Sciatic nerve (tissue), 2 donors: ENCODE measurements at regions of chr10 and their contacts with region 1.

Region 1: GRCh38 chr10:114045136-114046086 is 1.7 kb downstream of the ADRB1 start:
- DNase-seq: peak; percentile 65
- ATAC-seq: no peak

Region 2: DNA sequence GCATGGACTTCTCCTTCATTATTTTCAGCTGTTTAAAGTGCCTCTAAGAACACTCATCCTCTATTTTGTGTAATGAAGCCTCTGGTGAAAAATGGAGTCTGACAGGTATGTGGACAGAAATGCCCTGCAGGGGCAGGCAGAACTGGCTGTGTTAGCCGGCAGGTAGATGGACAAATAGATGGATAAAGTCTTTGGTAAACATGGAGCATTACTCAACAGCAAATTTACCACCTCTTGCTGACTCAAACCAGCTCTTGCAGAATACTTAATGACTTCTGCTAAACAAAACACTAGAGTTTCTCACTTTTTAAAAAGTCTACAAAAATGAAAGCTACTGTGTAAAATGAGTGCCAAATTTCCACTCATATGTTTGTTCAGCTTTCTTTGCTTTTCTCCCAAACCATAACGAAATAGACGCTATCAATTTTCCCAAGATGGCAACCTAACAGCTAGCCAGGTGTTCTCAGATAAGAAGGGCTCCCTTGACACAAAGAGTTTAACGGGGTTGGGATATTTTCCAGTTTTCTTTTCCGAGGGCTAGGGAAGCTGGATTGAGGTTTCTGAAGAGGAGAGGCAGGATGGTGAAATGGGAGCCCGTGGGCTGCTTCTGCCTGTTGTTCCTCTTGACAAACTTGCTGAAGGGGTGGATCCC is 564.4 kb before region 1 on chr10:
- intact Hi-C with region 1: no loop called
- DNase-seq: no peak
- ATAC-seq: peak; percentile 44

Region 3: DNA sequence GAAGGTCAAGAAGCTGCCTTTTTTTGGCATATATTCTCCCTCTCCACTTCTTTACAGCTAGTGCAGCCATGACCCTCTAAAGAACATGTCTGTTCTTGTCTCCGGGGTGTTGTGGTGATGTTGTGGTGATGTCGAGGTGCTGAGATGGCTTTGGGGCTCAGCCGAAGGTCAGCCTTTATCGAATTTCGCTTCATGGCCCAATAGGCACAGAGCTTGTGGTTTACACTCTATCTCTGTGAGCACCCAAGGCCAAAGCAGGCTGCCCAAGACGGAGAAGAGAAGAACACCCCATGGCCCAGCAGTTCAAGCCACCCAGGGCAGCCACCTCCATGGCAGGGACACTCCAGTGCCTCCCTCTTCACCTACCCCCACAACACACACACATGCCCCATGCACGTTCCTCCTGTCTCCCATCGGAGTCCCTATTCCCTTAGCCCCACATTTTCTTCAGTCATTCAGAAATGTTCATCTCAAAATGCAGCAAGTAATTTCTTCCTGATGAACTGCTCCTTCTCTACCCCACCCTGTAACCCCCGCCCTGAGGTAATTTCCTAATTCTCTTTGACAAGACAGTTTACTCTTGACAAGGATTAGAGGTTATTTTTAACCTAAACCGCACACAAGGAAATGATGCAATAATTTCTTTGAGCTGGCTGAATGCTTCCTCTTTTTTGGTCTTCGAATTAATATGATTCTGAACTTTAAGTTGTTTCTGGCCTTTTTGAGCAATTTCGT is 20.4 kb before region 1 on chr10:
- intact Hi-C with region 1: no loop called
- DNase-seq: no peak
- ATAC-seq: peak; percentile 76

Region 4: GRCh38 chr10:114095559-114096337 is 50.3 kb after region 1 on chr10:
- intact Hi-C with region 1: loop called (anchors 1 kb)
- DNase-seq: no peak
- ATAC-seq: peak; percentile 27